Heart left ventricle (tissue), 16 donors: ENCODE measurements at regions of chr5 and their contacts with region 1.

Region 1: DNA sequence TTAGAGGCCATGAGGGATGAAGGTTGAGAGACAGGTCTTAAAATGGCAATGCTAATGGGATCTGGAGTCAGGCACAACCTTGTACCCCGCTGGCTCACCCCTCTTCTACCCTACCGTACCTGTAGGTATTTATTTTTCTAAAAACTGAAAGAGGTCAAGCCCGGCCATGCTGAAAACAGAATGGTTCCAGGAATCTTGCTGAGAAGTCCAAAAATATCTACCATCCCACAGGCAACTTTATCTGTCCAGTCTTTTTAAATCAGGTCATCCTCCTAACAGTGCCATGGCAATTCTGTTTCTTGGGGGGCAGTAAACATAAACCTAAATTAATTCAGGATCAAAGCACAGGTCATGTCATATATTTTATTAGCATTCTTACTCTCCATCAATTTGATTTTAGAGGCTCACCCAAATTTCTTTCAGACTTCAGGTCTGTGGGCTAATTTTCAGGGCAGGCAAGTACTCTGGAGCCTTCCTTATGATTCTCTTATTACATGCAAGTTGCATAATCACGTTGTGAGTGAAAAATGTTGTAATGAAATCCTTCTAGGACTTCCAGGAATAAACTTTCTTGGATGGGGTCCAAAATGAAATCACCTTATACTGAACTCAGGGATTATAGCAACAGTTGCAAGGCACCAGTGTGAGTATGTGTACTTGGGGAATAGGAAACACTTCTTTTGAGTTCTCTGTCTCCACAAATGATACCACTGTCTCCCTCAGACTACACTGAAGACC is 102.7 kb upstream of the NREP start:
- DNase-seq: no peak
- ATAC-seq: peak; percentile 34 to 76 (median 70)
- H3K4me3 ChIP-seq: no peak overlapping the region
- H3K27ac ChIP-seq: peak overlapping the region in 5 of 12 donors; percentile 13 to 52 (median 46)
- H3K4me1 ChIP-seq: peaks cover 0 to 43% (median 14%) of the 10 kb centered on the region in 12 donors
- H3K27me3 ChIP-seq: no peaks in the 10 kb centered on the region
- CTCF ChIP-seq: no peak
- POLR2A ChIP-seq: no peak

Region 2: DNA sequence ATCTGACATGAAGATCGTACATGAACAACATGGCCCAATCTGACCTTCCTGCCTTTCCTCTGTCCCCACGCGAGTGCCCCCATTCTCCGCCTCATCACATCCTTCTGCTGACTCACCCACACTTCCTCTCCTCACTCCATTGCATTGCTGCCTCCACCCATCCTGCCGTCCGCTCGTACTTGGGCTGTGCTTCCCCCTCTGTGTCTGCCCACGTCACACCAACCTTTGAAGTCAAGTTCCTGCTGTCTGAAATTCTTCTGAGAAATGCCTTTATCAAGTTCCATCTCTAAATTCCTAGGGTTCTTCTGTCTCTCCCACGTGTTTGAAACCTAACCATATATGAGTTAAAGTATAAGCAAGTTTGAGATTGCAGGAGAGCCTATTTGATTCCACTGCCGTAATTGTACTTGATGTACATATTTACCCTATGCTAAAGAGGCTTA is 329.4 kb before region 1 on chr5:
- intact Hi-C with region 1: loop called in 1 of 10 experiments (anchors 5 kb)
- DNase-seq: peak; percentile 80 to 88 (median 81)
- ATAC-seq: peak; percentile 91 to 100 (median 98)
- H3K4me3 ChIP-seq: no peak overlapping the region
- H3K27ac ChIP-seq: peak overlapping the region in 11 of 12 donors; percentile 22 to 82 (median 57)
- H3K4me1 ChIP-seq: peaks cover 0 to 51% (median 0%) of the 10 kb centered on the region in 12 donors
- H3K27me3 ChIP-seq: no peaks in the 10 kb centered on the region
- CTCF ChIP-seq: no peak
- POLR2A ChIP-seq: no peak